Activated T-helper 1 cell treated with anti-CD3 and anti-CD28 coated beads, Interleukin-12 subunit alpha, Interleukin-12 subunit beta, Interleukin-2, Interleukin-4 antibody, amounts not matched to agents 30 ng/mL and 10 ng/mL and 1 ng/mL, durations not matched to agents 14 hours and 24 hours and 36 hours (primary cell): ENCODE measurements at regions of chr4 and their contacts with region 1.

Region 1: DNA sequence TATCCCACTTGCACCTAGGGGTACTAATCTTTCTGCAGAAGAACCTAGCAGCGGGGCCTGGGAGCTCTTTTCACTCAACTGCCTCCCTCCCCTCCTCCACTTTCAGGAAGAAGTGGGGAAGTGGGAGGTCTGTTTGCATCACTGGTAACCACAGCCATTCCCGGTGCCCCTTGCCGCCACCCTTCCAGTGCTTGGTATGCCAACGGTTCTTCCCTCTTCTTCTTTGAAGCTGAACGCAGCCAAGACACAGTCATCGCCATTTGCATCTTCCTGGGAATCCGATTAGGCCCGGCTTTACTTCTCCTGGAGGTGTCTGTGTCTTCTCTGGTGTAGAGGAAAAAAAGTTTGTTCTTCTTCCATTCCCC is 47.2 kb upstream of the RBPJ start:
- DNase-seq: no peak
- H3K4me3 Mint-ChIP-seq: peak overlapping the region; percentile 12
- H3K27ac Mint-ChIP-seq: peak overlapping the region; percentile 36
- H3K4me1 Mint-ChIP-seq: peaks cover 36% of the 10 kb centered on the region
- H3K27me3 Mint-ChIP-seq: no peaks in the 10 kb centered on the region

Region 2: DNA sequence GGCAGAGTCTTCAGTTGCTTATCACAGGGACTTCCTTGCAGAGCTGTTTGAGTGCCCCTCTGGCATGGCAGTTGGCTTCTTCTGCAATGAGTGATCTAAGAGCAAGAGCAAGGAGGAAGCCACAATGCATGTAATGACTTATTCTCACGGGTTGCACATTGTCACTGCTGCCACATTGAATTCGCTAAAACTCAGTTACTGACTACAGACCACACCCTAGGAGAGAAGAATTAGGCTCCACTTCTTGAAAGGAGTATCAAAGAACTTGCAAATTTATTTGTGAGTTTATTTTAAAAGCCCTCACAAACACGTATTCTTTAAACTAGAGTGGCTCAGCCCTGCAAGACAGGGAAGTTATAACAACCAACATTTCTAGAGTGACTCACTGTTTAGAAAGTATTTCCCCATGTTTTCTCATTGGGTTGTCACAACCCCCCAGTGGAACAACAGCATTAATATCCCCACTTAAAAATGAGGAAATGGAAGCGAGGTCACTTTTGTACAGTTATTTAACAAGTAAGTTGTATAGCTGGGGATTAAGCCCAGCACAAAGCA is 14.8 kb after region 1 on chr4:
- intact Hi-C with region 1: loop called (anchors 2 kb)
- DNase-seq: peak; percentile 20
- H3K4me3 Mint-ChIP-seq: peak overlapping the region; percentile 25
- H3K27ac Mint-ChIP-seq: peak overlapping the region; percentile 61
- H3K4me1 Mint-ChIP-seq: peaks cover 32% of the 10 kb centered on the region
- H3K27me3 Mint-ChIP-seq: no peaks in the 10 kb centered on the region